Colonic mucosa (tissue), 4 donors: ENCODE measurements at regions of chr9 and their contacts with region 1.

Region 1: DNA sequence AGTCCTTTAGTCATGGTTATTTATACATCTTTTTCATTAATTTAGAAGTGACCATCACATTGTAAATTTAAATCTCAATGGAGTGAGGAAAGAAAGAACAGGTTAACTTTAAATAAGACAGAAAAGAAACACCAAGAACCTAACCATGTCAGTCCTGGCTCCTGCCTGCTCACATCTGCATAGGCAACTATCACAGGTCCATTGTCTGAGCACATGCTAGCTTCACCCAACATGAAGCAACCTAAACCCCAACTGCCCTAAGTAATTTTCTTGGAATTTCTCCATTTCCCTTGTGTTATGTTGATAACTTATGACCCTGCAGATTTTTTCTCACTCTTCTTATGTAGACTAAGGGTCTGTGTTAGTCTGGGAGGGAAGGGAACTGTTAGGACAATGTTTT is 2205.9 kb upstream of the ACO1 start:
- DNase-seq: no peak
- H3K4me3 ChIP-seq: no peak overlapping the region
- H3K27ac ChIP-seq: no peak overlapping the region
- H3K4me1 ChIP-seq: no peaks in the 10 kb centered on the region
- H3K27me3 ChIP-seq: no peaks in the 10 kb centered on the region
- CTCF ChIP-seq: no peak

Region 2: GRCh38 chr9:29958469-29958868 is 220.1 kb before region 1 on chr9:
- intact Hi-C with region 1: loop called (anchors 5 kb)
- DNase-seq: no peak
- H3K4me3 ChIP-seq: no peak overlapping the region
- H3K27ac ChIP-seq: no peak overlapping the region
- H3K4me1 ChIP-seq: no peaks in the 10 kb centered on the region
- H3K27me3 ChIP-seq: no peaks in the 10 kb centered on the region
- CTCF ChIP-seq: no peak

Region 3: DNA sequence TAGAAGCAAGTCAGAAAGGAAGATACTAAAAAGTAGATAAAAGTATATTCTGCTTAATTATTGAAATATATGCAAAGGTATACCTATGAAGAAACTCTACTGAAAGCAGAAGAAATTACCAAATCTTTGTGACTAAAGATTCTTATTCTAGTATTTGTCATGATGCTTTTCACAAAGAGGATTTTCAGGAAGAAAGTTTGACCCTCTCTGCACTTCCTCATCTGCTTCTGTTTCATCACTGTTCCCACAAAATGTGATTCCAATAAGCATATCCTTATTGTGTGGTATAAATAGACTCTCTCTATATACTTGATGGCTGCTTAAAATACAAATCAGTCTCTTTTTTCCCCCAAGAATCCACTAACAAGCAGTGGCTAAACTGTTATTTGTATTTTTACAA is 66.3 kb after region 1 on chr9:
- intact Hi-C with region 1: loop called (anchors 10 kb)
- DNase-seq: no peak
- H3K4me3 ChIP-seq: no peak overlapping the region
- H3K27ac ChIP-seq: no peak overlapping the region
- H3K4me1 ChIP-seq: no peaks in the 10 kb centered on the region
- H3K27me3 ChIP-seq: no peaks in the 10 kb centered on the region
- CTCF ChIP-seq: no peak

Region 4: GRCh38 chr9:30258079-30258478 is 79.5 kb after region 1 on chr9:
- intact Hi-C with region 1: no loop called
- DNase-seq: no peak
- H3K4me3 ChIP-seq: no peak overlapping the region
- H3K27ac ChIP-seq: no peak overlapping the region
- H3K4me1 ChIP-seq: no peaks in the 10 kb centered on the region
- H3K27me3 ChIP-seq: no peaks in the 10 kb centered on the region
- CTCF ChIP-seq: no peak